BJ (cell line): ENCODE measurements at regions of chr3 and their contacts with region 1.

Region 1: DNA sequence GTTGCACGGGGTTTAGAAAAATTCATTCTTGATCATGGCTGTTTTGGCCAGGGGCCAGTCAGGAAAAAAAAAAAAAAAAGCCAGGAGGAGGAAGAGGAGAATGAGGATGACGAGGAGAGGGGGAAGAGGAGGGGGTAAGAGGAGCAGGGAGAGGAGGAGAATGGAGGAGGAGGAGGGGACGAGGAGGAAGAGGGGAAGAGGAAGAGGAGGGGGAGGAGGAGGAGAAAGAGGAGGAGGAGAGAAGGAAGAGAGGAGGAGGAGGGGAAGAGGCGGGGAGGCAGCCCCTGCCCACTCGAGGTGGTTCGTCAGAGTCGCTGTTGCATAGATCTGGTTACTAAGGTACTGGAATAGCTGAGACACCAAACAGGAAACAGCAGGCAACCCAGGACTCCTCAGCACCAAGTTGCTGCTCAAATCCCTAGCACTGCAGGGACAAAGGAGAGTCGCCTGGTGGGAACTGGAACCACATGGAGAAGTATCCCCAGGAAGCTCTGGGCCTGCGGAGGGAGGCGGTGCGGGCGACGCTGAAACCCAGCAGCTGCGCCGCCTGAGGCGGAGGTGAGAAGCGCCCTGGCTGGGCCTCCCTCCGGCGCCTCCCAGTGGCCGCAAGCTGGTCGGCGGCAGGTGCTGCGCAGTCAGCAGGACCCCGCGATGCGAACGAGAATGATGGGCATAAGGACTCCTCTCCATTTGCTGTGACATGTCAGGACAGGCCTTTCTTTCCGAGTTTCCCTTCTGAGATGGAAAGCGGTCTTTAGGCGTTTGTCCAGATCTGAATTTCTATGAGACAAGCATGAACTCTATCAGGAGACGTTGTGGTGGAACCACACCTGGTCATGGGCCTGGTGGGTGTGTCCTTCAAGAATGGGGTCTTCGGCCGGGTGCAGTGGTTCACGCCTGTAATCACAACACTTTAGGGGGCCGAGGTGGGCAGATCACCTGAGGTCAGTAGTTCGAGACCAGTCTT is 17.5 kb downstream of the FAM240A start:
- DNase-seq: peak; percentile 13
- H3K4me3 ChIP-seq: 0 out of 2 replicates have a peak overlapping the region, but pooled peaks have one; percentile 2
- H3K27me3 ChIP-seq: peaks cover 3% of the 10 kb centered on the region; the same call in 1 of the 2 replicates
- CTCF ChIP-seq: peak; percentile 98

Region 2: GRCh38 chr3:46368569-46368968 is 261.3 kb before region 1 on chr3:
- CTCF ChIA-PET with region 1: no interaction called
- POLR2A ChIA-PET with region 1: interaction called, 13 read pairs
- DNase-seq: no peak
- H3K4me3 ChIP-seq: no peak overlapping the region
- H3K27me3 ChIP-seq: peaks cover 7% of the 10 kb centered on the region
- CTCF ChIP-seq: no peak

Region 3: GRCh38 chr3:46595819-46596314 is 34.0 kb before region 1 on chr3:
- CTCF ChIA-PET with region 1: no interaction called
- POLR2A ChIA-PET with region 1: no interaction called
- DNase-seq: no peak
- H3K4me3 ChIP-seq: no peak overlapping the region
- H3K27me3 ChIP-seq: peaks cover 3% of the 10 kb centered on the region
- CTCF ChIP-seq: no peak

Region 4: DNA sequence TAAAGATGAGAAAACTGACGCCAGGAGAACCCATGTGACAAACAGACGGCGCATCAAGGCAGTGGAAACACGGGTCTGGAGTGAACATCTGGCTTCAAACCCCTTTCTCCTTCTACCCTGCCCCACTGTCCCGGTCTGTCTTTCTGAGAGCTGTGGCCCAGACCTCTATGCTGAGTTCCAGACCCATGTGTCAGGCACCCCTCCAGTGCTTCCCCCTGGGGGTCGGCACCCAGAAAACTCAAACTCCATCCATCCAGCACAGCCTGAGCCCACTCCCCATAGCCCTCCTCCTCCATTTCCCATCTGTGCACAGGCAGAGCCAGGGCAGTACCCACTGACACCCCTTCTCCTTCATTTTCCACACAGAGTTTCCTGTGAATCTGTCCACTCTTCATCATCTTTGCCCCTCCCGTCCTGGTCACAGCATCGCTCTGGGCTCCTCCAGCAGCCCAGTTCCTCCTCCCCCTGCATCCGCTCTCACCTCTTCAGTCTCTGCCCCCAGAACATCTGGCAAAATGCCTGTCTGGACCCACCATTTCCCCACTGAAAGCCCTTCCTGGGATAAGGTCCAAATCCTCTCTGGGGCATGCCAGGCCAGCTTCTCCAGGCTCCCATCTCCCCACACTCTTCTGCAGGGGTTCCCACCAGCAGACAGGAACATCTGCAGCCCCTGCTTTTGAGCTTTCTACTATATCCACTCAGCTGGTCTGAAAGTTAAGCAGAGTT is 14.6 kb before region 1 on chr3:
- CTCF ChIA-PET with region 1: interaction called, 11 read pairs
- POLR2A ChIA-PET with region 1: no interaction called
- DNase-seq: no peak
- H3K4me3 ChIP-seq: no peak overlapping the region
- H3K27me3 ChIP-seq: peaks cover 26% of the 10 kb centered on the region
- CTCF ChIP-seq: no peak

Region 5: GRCh38 chr3:46642971-46643370 is 13.1 kb after region 1 on chr3:
- CTCF ChIA-PET with region 1: interaction called, 33 read pairs
- POLR2A ChIA-PET with region 1: no interaction called
- DNase-seq: no peak
- H3K4me3 ChIP-seq: no peak overlapping the region
- H3K27me3 ChIP-seq: peaks cover 3% of the 10 kb centered on the region
- CTCF ChIP-seq: no peak